ENCODE measurements at regions of chr14 and their contacts with region 1.

Region 1: GRCh38 chr14:54773171-54773975 is 129.3 kb downstream of the GCH1 start:
- DNase-seq: peak; percentile 96
- H3K4me3 ChIP-seq: no peak overlapping the region
- H3K27ac ChIP-seq: peak overlapping the region; percentile 78 to 91 (median 87)
- H3K4me1 ChIP-seq: peaks cover 0 to 71% (median 52%) of the 10 kb centered on the region in 4 donors
- H3K27me3 ChIP-seq: no peaks in the 10 kb centered on the region
- CTCF ChIP-seq: peak; percentile 53 to 91 (median 71)
- EP300 ChIP-seq: peak; percentile 24 to 96 (median 47)
- POLR2A ChIP-seq: no peak

Region 2: DNA sequence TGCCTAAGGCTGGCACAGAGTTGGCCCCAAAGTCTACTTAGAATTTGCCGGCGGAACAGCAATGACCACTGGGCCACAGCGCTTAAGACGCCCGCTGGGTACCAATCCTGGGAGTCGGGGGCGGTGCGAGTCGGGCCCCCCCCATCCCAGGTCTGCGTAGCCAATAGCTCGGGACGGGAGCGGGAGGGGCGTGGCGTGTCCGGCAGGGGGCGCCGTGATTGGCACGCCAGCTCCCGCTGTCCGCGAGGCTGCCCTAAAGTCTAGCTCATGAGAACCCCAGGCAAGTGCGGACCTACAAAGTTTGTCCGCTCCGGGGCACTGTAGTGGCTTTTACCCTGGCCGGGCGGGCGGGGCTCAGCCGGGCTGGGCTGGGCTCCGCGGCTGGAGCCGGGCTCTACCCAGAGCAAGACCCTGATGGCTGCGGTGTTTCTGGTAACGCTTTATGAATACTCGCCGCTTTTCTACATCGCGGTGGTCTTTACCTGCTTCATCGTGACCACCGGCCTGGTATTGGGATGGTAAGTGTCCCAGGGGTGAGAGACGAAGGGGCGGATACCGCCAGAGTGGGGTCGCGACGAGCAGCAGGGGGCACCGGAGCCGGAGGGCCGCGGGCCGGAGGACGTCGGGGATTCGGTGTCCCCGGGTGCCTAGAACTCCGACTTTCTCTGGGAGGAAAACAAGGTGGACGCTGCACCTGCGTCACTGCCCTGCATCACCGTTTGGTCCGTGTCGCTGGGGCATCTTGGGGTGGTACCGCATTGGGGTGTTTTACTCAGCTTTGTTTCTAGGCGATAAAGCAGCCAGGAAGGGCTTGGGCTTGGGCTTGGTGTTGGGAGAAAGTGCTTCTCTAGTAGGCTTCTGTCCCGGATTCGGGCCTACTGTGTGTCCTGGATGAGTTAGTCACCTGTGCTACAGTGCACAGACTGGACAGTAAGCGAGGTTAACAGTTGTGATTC is 263.5 kb before region 1 on chr14 and contains the start of gene CGRRF1:
- intact Hi-C with region 1: loop called (anchors 5 kb)
- DNase-seq: peak; percentile 99
- H3K4me3 ChIP-seq: peak within 1 kb of the TSS; percentile 70 to 95 (median 88)
- H3K27ac ChIP-seq: peak within 1 kb of the TSS; percentile 83 to 89 (median 88)
- H3K4me1 ChIP-seq: peaks cover 0 to 30% (median 19%) of the 10 kb centered on the region in 4 donors
- H3K27me3 ChIP-seq: no peaks in the 10 kb centered on the region
- CTCF ChIP-seq: peak; percentile 5 to 66 (median 56)
- EP300 ChIP-seq: peak in 1 of 4 donors; percentile 30
- POLR2A ChIP-seq: peak; percentile 67 to 71
- total RNA-seq, gene CGRRF1: 16.8 to 52.8 (median 34.1) TPM

Region 3: DNA sequence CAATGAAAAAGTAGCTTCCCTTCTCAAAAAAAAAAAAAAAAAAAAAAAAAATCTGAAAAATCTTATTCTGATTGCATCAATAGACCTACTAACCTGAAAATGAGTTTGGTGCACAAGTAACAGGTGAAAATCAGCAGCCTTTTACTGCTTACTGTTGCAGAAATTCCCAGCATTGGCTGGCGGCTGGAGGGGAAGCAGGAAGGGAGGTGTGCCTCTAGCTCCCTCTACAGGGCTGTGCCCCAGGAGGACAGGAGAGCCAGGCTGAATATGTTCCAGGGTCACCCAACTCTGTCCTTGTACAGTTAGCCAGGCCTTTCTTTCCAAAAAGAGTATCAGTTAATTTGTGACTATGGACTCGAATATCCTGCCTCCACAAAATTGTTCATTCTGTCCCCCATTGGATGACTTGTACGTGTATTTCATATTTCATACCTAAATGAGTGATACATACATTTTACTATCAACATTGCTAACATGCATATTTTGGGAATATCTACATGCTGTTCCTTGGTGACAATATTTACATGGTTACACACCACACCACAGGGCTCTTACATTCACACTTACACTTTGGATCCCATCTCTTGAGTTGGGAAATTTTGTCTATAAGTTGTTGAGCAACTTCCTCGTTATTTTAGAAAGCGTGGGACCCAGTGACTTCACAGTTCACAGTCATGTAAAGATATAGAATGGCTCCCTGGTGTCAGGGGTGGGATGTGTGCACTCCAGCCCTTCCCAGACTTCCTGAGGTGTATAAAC is 81.7 kb before region 1 on chr14:
- intact Hi-C with region 1: loop called (anchors 2 kb)
- DNase-seq: peak; percentile 92
- H3K4me3 ChIP-seq: no peak overlapping the region
- H3K27ac ChIP-seq: peak overlapping the region; percentile 24 to 95 (median 57)
- H3K4me1 ChIP-seq: peaks cover 0 to 40% (median 36%) of the 10 kb centered on the region in 4 donors
- H3K27me3 ChIP-seq: no peaks in the 10 kb centered on the region
- CTCF ChIP-seq: peak; percentile 74 to 82 (median 82)
- EP300 ChIP-seq: no peak
- POLR2A ChIP-seq: no peak

Region 4: DNA sequence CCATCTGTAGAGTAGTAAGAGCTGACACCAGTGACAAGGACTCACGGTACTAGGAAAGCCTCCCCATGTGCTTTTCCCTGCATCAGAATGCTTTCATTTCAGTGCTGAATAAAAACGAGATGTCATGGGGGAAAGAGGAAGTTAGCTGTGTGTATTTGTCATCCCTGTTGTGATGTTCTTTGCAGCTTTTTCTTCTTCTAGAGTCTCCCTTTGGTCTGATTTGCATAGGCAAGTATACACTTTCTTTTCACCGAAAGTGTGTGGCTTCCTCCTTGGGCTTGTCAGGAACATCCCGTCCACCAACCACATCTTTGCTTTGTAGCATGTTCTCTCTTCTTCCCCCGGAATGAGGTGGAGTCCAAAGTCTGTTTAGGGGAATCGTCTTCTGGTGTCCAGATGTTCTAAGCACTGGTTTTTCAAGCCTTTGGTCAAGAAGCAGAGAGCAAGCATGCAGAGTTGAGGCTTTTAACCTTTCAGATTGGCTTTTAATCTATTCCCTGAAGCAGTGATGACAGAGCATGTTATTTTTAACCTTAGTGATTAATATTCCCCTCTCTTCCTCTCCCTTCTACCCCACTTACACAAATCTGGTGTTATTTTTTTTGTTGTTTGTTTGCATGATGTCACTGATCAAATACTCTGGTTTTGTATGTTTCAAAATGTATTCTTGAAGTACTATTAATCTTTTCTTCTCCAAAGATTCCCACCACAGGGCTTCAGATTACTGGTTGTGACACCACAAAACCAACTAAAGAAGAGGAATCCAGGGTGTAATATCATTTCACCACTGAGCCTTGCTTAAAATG is 43.0 kb before region 1 on chr14:
- intact Hi-C with region 1: loop called (anchors 2 kb)
- DNase-seq: no peak
- H3K4me3 ChIP-seq: peak overlapping the region in 1 of 4 donors; percentile 14
- H3K27ac ChIP-seq: peak overlapping the region; percentile 52 to 84 (median 72)
- H3K4me1 ChIP-seq: peaks cover 0 to 64% (median 55%) of the 10 kb centered on the region in 4 donors
- H3K27me3 ChIP-seq: no peaks in the 10 kb centered on the region
- CTCF ChIP-seq: no peak
- EP300 ChIP-seq: no peak
- POLR2A ChIP-seq: no peak